ENCODE measurements at regions of chr13 and their contacts with region 1.

Region 1: DNA sequence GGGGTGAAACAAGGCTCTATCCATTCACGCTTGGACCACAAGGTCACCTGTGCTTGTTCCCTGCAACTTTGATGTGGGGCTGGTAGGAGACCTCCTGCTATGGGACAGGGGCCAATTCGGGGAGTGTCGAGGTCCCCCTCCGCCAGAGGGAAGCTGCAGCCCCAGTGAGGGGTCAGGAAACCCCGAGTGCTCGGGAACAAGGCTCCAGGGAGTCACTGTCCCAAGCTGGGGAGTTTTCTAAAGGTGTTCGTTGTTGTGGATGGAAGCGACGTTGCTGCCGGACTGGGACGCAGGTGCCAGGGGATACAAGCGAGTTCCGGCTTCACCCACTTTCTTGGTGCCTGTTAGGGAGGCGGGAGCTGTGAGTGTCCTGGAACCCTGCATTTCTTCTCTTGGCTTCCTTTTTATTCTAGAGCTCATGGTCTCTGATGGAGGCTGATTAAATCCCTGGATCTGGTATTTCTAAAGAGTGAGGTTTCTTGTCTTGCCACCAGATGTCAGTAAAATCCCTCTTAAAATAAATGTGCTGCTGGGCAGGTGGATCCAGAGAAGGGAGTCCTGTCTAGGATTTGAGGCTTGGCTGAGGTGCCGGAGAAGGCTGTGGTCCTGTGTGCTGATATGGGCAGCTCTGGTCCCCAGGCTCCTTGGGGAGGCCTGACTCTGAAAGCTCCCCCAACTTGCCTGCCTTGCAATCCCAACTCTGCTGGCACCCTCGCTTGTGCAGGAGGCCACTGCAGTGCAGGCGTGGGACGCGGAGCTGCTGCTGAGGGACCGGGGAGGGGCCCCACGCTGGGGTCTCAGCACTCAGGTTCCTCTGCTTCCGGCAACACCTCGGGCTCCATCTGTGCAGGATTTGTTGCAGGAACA is 153.9 kb downstream of the TEX29 start:
- DNase-seq: peak; percentile 21
- ATAC-seq: peak; percentile 85
- H3K4me3 ChIP-seq: no peak overlapping the region
- H3K27ac ChIP-seq: no peak overlapping the region
- H3K4me1 ChIP-seq: no peaks in the 10 kb centered on the region
- H3K27me3 ChIP-seq: no peaks in the 10 kb centered on the region
- CTCF ChIP-seq: peak; percentile 55 to 66 (median 58); a peak in 5 of 6 replicates
- POLR2A ChIP-seq: no peak
- RAD21 ChIP-seq: peak; percentile 76

Region 2: GRCh38 chr13:111262715-111263114 is 211.7 kb before region 1 on chr13:
- CTCF ChIA-PET with region 1: no interaction called
- POLR2A ChIA-PET with region 1: no interaction called
- RAD21 ChIA-PET with region 1: no interaction called
- intact Hi-C with region 1: no loop called
- DNase-seq: no peak
- ATAC-seq: no peak
- H3K4me3 ChIP-seq: no peak overlapping the region
- H3K27ac ChIP-seq: no peak overlapping the region
- H3K4me1 ChIP-seq: no peaks in the 10 kb centered on the region
- H3K27me3 ChIP-seq: no peaks in the 10 kb centered on the region
- CTCF ChIP-seq: no peak
- POLR2A ChIP-seq: no peak
- RAD21 ChIP-seq: no peak

Region 3: GRCh38 chr13:111554539-111555267 is 80.3 kb after region 1 on chr13:
- CTCF ChIA-PET with region 1: no interaction called
- POLR2A ChIA-PET with region 1: no interaction called
- RAD21 ChIA-PET with region 1: no interaction called
- intact Hi-C with region 1: no loop called
- DNase-seq: no peak
- ATAC-seq: peak; percentile 54; the same call in 1 of the 2 replicates
- H3K4me3 ChIP-seq: no peak overlapping the region
- H3K27ac ChIP-seq: no peak overlapping the region
- H3K4me1 ChIP-seq: no peaks in the 10 kb centered on the region
- H3K27me3 ChIP-seq: peaks cover 20% of the 10 kb centered on the region; the same call in 1 of the 2 replicates
- CTCF ChIP-seq: no peak
- POLR2A ChIP-seq: no peak
- RAD21 ChIP-seq: no peak

Region 4: GRCh38 chr13:112510002-112510780 is 1035.8 kb after region 1 on chr13:
- CTCF ChIA-PET with region 1: no interaction called
- POLR2A ChIA-PET with region 1: no interaction called
- RAD21 ChIA-PET with region 1: no interaction called
- intact Hi-C with region 1: loop called (anchors 5 kb)
- DNase-seq: peak; percentile 53
- ATAC-seq: peak; percentile 95
- H3K4me3 ChIP-seq: no peak overlapping the region
- H3K27ac ChIP-seq: no peak overlapping the region
- H3K4me1 ChIP-seq: no peaks in the 10 kb centered on the region
- H3K27me3 ChIP-seq: no peaks in the 10 kb centered on the region
- CTCF ChIP-seq: peak; percentile 23 to 55 (median 52); a peak in 5 of 6 replicates
- POLR2A ChIP-seq: no peak
- RAD21 ChIP-seq: peak; percentile 56

Region 5: DNA sequence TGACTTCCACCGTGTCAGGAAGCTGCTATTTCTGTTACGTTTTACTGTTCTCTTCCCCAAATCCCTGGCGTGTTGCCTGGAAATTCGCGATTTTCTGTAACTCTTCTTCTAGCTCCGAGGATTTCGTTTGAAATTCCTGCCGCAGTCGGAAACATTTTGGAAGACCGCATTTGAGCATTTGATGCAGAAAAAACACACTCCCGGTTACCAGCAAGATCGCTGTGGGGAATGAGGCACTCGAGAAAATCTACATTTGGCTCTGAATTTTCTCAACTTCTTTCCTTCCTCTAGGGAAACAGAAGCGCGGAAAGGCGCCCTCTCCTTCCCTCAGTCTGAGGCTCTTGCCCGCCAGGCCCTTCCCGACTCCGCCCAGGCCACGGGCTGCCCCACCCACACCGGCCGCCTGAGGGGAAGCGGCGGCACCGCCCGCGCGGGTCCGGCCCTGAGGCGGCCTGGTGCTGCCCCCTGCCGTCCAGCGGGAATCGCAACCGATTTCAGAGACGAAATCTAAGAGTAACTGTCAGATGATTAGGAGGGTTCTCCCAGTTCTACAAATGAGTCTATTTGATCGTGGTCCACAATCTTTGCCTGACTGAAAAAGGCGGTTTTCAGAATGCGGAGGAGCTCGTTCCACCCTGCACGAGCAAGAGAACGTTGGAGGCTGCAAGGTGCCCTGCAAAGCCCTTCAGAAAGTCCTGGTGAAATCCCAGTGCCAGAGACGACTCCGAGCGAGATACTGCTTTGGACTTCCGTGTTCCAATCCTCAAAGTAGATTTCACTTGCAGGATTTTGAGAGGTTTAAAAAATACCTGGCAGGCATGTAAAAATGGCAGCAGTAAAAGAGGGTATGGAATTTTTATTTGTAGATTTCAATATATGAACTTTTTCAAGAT is 1132.0 kb after region 1 on chr13:
- CTCF ChIA-PET with region 1: no interaction called
- POLR2A ChIA-PET with region 1: no interaction called
- RAD21 ChIA-PET with region 1: no interaction called
- intact Hi-C with region 1: loop called (anchors 1 kb)
- DNase-seq: peak; percentile 65
- ATAC-seq: peak; percentile 100
- H3K4me3 ChIP-seq: peak overlapping the region; percentile 40 to 49
- H3K27ac ChIP-seq: no peak overlapping the region
- H3K4me1 ChIP-seq: peaks cover 0 to 9% of the 10 kb centered on the region in 2 experiments; a peak in 2 of 4 replicates
- H3K27me3 ChIP-seq: peaks cover 10% of the 10 kb centered on the region; the same call in 1 of the 2 replicates
- CTCF ChIP-seq: peak; percentile 80 to 94 (median 92)
- POLR2A ChIP-seq: no peak
- RAD21 ChIP-seq: peak; percentile 95

Measured in HCT116 (cell line).